PC-3 (cell line): ENCODE measurements at regions of chr18 and their contacts with region 1.

Region 1: GRCh38 chr18:14086458-14087231 is 45.6 kb downstream of the ZNF519 start:
- DNase-seq: peak; percentile 63
- ATAC-seq: peak; percentile 79
- H3K4me3 ChIP-seq: no peak overlapping the region
- H3K27ac ChIP-seq: no peak overlapping the region
- H3K4me1 ChIP-seq: no peaks in the 10 kb centered on the region
- H3K27me3 ChIP-seq: peaks cover 9% of the 10 kb centered on the region; the same call in 1 of the 2 replicates
- CTCF ChIP-seq: peak; percentile 92

Region 2: GRCh38 chr18:13558124-13558523 is 528.5 kb before region 1 on chr18:
- CTCF ChIA-PET with region 1: no interaction called
- POLR2A ChIA-PET with region 1: no interaction called
- intact Hi-C with region 1: loop called (anchors 10 kb)
- DNase-seq: peak; percentile 59
- ATAC-seq: peak; percentile 98
- H3K4me3 ChIP-seq: no peak overlapping the region
- H3K27ac ChIP-seq: no peak overlapping the region
- H3K4me1 ChIP-seq: no peaks in the 10 kb centered on the region
- H3K27me3 ChIP-seq: peaks cover 70% of the 10 kb centered on the region
- CTCF ChIP-seq: peak; percentile 85

Region 3: GRCh38 chr18:13813271-13813849 is 273.3 kb before region 1 on chr18:
- CTCF ChIA-PET with region 1: interaction called, 7 read pairs
- POLR2A ChIA-PET with region 1: no interaction called
- intact Hi-C with region 1: loop called (anchors 1 kb)
- DNase-seq: peak; percentile 83
- ATAC-seq: peak; percentile 85
- H3K4me3 ChIP-seq: no peak overlapping the region
- H3K27ac ChIP-seq: no peak overlapping the region
- H3K4me1 ChIP-seq: peaks cover 30% of the 10 kb centered on the region
- H3K27me3 ChIP-seq: peaks cover 31% of the 10 kb centered on the region
- CTCF ChIP-seq: peak; percentile 92

Region 4: GRCh38 chr18:13823707-13824395 is 262.8 kb before region 1 on chr18 and contains the start of gene MC5R:
- CTCF ChIA-PET with region 1: interaction called, 3 read pairs
- POLR2A ChIA-PET with region 1: no interaction called
- intact Hi-C with region 1: loop called (anchors 2 kb)
- DNase-seq: peak; percentile 61
- ATAC-seq: peak; percentile 90
- H3K4me3 ChIP-seq: peak within 1 kb of the TSS; percentile 62
- H3K27ac ChIP-seq: no peak within 1 kb of the TSS
- H3K4me1 ChIP-seq: peaks cover 3% of the 10 kb centered on the region; the same call in 1 of the 2 replicates
- H3K27me3 ChIP-seq: peaks cover 67% of the 10 kb centered on the region
- CTCF ChIP-seq: peak; percentile 89
- total RNA-seq, gene MC5R: not detected in 2 replicates

Region 5: GRCh38 chr18:13831864-13832508 is 254.7 kb before region 1 on chr18:
- CTCF ChIA-PET with region 1: interaction called, 3 read pairs
- POLR2A ChIA-PET with region 1: no interaction called
- intact Hi-C with region 1: loop called (anchors 1 kb)
- DNase-seq: peak; percentile 72
- ATAC-seq: peak; percentile 84
- H3K4me3 ChIP-seq: no peak overlapping the region
- H3K27ac ChIP-seq: no peak overlapping the region
- H3K4me1 ChIP-seq: no peaks in the 10 kb centered on the region
- H3K27me3 ChIP-seq: peaks cover 60% of the 10 kb centered on the region
- CTCF ChIP-seq: peak; percentile 61